Kidney (tissue), 22 donors: ENCODE measurements at regions of chr17 and their contacts with region 1.

Region 1: DNA sequence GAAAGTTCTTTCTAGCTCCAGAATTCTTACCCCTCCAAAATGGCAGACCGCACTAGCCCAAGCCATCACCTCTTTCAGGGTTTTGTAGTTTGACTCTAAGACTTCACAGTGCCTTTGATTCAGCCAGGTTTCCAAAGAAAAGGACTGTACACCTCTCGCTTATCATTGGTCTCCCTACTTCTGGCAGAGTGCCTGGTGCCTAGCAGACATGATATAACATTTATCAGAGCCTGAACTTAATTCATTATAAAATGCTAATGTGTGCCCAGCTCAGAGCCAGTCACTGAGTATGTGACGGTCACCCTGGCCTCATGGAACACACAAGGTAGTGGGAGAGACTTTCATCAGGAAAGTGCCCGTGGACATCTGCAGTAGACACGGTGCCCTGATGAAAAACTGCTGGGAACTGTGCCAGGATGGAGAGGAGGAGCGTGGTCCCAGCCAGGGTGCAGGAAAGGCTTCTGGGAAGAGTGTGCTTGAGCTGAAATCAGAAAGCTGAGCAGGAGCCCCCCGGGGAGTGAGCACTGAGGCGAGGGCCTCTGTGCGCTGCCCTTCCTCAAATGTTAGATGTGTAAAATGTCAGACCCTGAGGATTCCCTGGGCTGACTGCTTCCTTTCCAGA is 34.3 kb upstream of the LGALS9 start:
- DNase-seq: no peak
- H3K4me3 ChIP-seq: no peak overlapping the region
- H3K27ac ChIP-seq: peak overlapping the region in 1 of 2 donors; percentile 26
- H3K4me1 ChIP-seq: peaks cover 0 to 7% (median 4%) of the 10 kb centered on the region in 3 donors
- H3K27me3 ChIP-seq: no peaks in the 10 kb centered on the region
- CTCF ChIP-seq: no peak

Region 2: DNA sequence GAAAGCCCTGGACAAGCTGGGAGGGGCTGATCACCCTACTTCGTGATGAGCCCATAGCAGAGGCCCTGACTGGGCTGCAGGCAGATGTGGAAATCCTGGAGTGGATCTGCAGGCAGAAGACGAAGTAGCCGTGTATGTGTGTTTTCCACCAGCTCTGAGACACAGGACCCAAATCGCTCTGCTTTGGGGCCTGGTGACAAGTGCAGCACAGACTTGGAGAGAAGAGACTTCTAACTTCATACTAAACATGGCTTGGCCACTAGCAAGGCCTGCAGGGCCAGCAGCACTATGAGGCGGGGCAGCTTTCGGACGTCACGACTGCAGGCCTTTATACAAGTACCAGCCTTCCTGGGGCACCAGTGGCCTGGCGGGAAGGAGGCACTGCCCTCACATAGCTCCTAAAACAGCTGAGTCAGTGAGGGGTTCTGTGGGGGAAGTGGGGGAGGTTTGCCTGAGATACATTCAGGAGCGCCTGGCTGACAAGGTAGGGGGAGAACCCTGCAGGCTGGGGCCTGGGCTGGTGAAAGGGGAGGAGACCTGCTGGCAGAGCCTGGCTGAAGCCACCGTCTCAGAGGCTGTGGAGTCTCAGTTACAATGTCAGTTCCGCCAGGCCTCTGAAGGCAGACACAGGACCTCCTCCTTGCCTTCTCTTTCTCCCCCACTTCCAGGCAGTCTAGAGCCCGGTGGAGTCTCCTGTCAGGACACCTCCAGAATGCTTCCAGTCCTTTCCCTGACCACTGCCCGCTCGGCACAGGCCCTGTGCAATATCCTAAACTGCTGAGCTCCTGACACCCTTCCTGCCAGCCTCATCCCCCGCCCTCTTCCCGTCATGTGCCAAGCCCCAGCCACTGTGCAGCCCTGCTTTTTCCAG is 229.3 kb before region 1 on chr17:
- intact Hi-C with region 1: loop called (anchors 10 kb)
- DNase-seq: peak in 3 of 5 donors; percentile 60 to 68 (median 66)
- H3K4me3 ChIP-seq: no peak overlapping the region
- H3K27ac ChIP-seq: no peak overlapping the region
- H3K4me1 ChIP-seq: no peaks in the 10 kb centered on the region
- H3K27me3 ChIP-seq: no peaks in the 10 kb centered on the region
- CTCF ChIP-seq: no peak